ENCODE measurements at regions of chr15 and their contacts with region 1.

Region 1: DNA sequence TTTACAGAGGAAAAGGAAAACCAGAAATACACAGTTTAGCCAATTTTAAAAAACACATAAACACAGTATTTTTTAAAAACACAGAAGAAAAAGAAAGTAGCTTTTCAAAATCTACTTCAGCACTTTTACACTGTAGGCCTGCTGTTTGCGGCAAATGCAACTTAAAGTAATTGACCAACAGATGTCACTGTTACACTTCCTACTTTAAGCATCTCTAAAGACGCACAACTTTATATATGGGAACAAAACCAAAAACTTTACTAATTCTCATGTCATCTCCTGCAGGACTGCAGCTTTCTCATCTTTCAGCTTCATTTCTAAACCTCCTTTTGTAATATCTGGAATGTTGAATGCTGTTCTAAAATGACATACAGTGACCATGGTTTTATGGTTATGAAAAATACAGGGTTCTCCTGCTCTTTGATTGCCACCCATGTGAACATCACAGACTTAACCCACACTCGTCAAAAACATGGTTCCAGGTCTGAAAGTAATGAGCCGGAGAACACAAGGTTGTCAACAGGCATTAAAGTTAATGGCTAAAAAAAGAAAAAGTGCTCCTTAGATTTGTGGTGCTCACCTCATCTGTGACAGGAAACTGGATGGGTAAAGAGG is 107.9 kb downstream of the FMN1 start:
- DNase-seq: no peak
- H3K4me3 ChIP-seq: no peak overlapping the region
- CTCF ChIP-seq: peak; percentile 51

Region 2: DNA sequence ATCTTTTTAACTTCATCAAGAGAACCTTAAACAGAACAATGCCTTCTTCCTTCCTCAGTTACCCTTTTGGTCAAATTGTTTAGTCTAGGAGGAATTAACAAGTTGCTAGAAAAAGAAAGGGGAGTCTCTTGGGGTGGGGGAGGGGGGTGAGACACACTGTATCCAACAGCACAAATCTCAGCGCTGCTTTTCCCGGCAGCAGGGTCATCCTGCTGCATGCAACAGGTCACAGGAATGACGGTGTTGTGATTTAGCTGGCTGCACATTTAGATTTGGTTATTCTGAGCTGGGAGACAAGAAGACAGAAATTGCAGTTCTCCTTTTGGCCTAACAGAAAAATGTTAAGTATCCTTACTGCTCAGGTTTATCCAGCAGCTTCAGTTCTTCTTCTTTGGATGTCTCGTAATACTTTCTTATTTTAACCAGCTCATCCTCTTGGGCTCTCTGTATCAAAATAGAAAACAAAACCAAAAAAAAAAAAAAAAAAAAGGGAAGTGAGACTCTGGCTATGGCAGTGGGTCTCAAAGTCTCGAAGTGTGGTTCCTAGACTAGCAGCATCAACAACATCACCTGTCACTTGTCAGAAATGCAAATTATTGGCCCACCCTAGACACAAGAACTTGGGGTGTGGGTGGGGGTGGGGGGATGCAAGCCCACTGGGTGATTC is 178.3 kb before region 1 on chr15:
- CTCF ChIA-PET with region 1: no interaction called
- POLR2A ChIA-PET with region 1: no interaction called
- DNase-seq: no peak
- H3K4me3 ChIP-seq: no peak overlapping the region
- CTCF ChIP-seq: no peak

Region 3: DNA sequence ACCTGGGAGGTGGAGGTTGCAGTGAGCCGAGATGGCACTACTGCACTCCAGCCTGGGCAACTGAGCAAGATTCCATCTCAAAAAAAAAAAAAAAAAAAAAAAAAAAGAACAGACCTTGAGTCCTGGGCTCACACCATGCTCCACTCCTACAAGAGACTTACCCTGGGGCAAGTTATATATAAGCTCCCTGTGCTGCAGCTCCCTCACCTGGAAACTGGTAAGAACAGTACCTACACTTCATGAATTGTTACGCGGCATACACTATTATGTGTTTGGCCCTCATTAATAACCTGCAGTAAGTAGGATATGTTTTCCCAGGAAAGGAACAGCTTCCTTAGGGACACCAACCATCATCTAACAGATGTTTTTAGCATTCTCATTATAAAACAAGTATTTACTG is 11.7 kb before region 1 on chr15:
- CTCF ChIA-PET with region 1: interaction called, 26 read pairs
- POLR2A ChIA-PET with region 1: no interaction called
- DNase-seq: no peak
- H3K4me3 ChIP-seq: no peak overlapping the region
- CTCF ChIP-seq: no peak

Region 4: GRCh38 chr15:33116198-33116597 is 29.6 kb after region 1 on chr15:
- CTCF ChIA-PET with region 1: interaction called, 813 read pairs
- POLR2A ChIA-PET with region 1: no interaction called
- DNase-seq: no peak
- H3K4me3 ChIP-seq: no peak overlapping the region
- CTCF ChIP-seq: no peak

Region 5: GRCh38 chr15:33154351-33155166 is 67.9 kb after region 1 on chr15:
- CTCF ChIA-PET with region 1: interaction called, 16 read pairs
- POLR2A ChIA-PET with region 1: no interaction called
- DNase-seq: peak; percentile 86
- H3K4me3 ChIP-seq: no peak overlapping the region; the same call in 1 of the 2 replicates
- CTCF ChIP-seq: no peak

Region 6: DNA sequence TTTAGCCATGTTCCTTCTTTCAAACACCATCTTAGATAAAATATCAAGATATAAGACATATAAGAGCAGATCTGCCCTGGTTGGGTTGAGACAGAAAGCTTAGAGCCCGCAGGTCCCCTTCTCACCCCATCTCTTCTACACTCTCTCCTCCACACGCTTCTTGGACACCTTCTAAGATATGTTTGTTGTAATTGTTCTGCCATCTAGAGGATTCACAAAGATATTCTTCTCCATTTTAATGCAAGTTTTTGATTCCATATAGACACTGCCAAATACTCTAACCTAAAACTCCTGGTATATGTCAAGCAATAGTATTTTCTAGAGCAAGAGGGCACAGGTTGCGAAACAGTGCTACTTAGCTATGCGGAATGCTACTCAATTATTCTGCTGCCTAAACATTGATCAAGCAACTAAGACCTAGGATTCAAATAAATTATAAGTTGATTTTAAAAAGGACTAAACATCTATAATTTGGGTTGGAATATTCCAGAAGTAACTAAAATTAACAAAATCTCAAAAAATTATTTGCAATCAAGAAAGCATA is 888.5 kb after region 1 on chr15:
- CTCF ChIA-PET with region 1: no interaction called
- POLR2A ChIA-PET with region 1: no interaction called
- DNase-seq: no peak
- H3K4me3 ChIP-seq: no peak overlapping the region
- CTCF ChIP-seq: no peak